ENCODE measurements at regions of chr9 and their contacts with region 1.

Region 1: DNA sequence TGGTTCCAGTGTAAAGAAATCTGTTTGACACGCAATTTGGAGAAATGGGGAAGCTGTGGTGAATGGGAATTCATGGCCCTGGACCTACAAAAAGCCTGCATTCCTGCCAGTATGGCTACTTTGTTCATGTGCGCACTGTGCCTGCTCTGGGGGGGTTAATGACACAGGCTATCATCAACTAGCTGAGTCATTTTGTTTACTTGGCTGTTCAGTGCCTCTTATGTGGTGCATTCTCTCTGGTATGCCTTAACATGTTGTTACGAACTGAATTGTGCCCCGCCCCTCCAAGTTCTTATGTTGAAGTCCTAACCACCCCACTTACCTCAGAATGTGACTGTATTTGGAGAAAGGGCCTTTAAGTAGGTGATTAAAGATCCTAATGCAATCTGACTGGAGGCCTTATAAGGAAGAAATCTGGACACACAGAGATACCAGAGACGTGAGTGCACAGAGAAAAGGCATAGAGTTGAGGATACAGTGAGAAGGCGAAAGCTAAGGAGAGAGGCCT is 20.4 kb upstream of the UBAP1 start:
- DNase-seq: no peak
- ATAC-seq: no peak
- H3K4me3 ChIP-seq: no peak overlapping the region
- H3K4me3 Mint-ChIP-seq: no peak overlapping the region
- H3K27ac ChIP-seq: no peak overlapping the region
- H3K27ac Mint-ChIP-seq: no peak overlapping the region
- H3K4me1 ChIP-seq: no peaks in the 10 kb centered on the region
- H3K4me1 Mint-ChIP-seq: no peaks in the 10 kb centered on the region
- H3K27me3 ChIP-seq: peaks cover 0 to 47% (median 12%) of the 10 kb centered on the region in 4 experiments
- H3K27me3 Mint-ChIP-seq: peaks cover 32% of the 10 kb centered on the region
- CTCF ChIP-seq: no peak

Region 2: DNA sequence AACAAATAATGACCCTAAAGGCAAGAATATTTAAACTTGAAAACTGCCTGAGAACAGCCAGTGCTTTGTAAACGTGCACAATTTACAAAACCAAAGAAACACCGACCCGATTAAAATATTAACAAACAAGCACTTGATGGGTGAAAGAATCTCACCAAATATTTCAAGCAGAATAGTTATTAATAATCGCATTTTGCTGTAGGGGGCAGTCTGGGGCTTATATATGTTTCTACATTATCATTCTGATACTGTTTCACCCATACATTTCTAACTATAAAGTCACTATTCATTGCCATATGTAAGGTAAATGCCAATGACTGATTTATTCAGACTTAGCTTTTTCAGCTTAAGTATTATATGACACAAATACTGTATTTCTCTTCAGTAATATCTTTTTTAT is 147.4 kb before region 1 on chr9:
- CTCF ChIA-PET with region 1: interaction called, 8 read pairs
- POLR2A ChIA-PET with region 1: no interaction called
- intact Hi-C with region 1: loop called (anchors 1 kb)
- DNase-seq: peak; percentile 50
- ATAC-seq: no peak
- H3K4me3 ChIP-seq: no peak overlapping the region
- H3K4me3 Mint-ChIP-seq: no peak overlapping the region
- H3K27ac ChIP-seq: no peak overlapping the region
- H3K27ac Mint-ChIP-seq: no peak overlapping the region
- H3K4me1 ChIP-seq: no peaks in the 10 kb centered on the region
- H3K4me1 Mint-ChIP-seq: no peaks in the 10 kb centered on the region
- H3K27me3 ChIP-seq: no peaks in the 10 kb centered on the region
- H3K27me3 Mint-ChIP-seq: no peaks in the 10 kb centered on the region
- CTCF ChIP-seq: peak; percentile 74

Measured in B cell (primary cell).